CD14-positive monocyte (primary cell): ENCODE measurements at regions of chr12 and their contacts with region 1.

Region 1: GRCh38 chr12:33226671-33227070 is 212.9 kb downstream of the SYT10 start:
- DNase-seq: no peak
- H3K4me3 ChIP-seq: no peak overlapping the region
- H3K4me3 Mint-ChIP-seq: no peak overlapping the region
- H3K27ac ChIP-seq: no peak overlapping the region
- H3K27ac Mint-ChIP-seq: no peak overlapping the region
- H3K4me1 ChIP-seq: no peaks in the 10 kb centered on the region
- H3K4me1 Mint-ChIP-seq: no peaks in the 10 kb centered on the region
- H3K27me3 ChIP-seq: no peaks in the 10 kb centered on the region
- H3K27me3 Mint-ChIP-seq: peaks cover 0 to 2% (median 0%) of the 10 kb centered on the region in 3 donors
- CTCF ChIP-seq: no peak

Region 2: GRCh38 chr12:33296529-33296928 is 69.9 kb after region 1 on chr12:
- intact Hi-C with region 1: loop called in 1 of 2 experiments (anchors 10 kb)
- DNase-seq: no peak
- H3K4me3 ChIP-seq: no peak overlapping the region
- H3K4me3 Mint-ChIP-seq: no peak overlapping the region
- H3K27ac ChIP-seq: no peak overlapping the region
- H3K27ac Mint-ChIP-seq: no peak overlapping the region
- H3K4me1 ChIP-seq: no peaks in the 10 kb centered on the region
- H3K4me1 Mint-ChIP-seq: no peaks in the 10 kb centered on the region
- H3K27me3 ChIP-seq: no peaks in the 10 kb centered on the region
- H3K27me3 Mint-ChIP-seq: no peaks in the 10 kb centered on the region
- CTCF ChIP-seq: no peak

Region 3: GRCh38 chr12:33310471-33310870 is 83.8 kb after region 1 on chr12:
- intact Hi-C with region 1: no loop called
- DNase-seq: no peak
- H3K4me3 ChIP-seq: no peak overlapping the region
- H3K4me3 Mint-ChIP-seq: no peak overlapping the region
- H3K27ac ChIP-seq: no peak overlapping the region
- H3K27ac Mint-ChIP-seq: peak overlapping the region in 1 of 7 donors; percentile 82
- H3K4me1 ChIP-seq: no peaks in the 10 kb centered on the region
- H3K4me1 Mint-ChIP-seq: no peaks in the 10 kb centered on the region
- H3K27me3 ChIP-seq: no peaks in the 10 kb centered on the region
- H3K27me3 Mint-ChIP-seq: no peaks in the 10 kb centered on the region
- CTCF ChIP-seq: no peak